Panc1 (cell line): ENCODE measurements at regions of chr9 and their contacts with region 1.

Region 1: GRCh38 chr9:116432051-116432450 is 255.1 kb upstream of the TRIM32 start:
- DNase-seq: no peak
- ATAC-seq: no peak
- H3K4me3 ChIP-seq: no peak overlapping the region
- H3K27ac ChIP-seq: no peak overlapping the region
- H3K4me1 ChIP-seq: no peaks in the 10 kb centered on the region
- H3K27me3 ChIP-seq: no peaks in the 10 kb centered on the region
- CTCF ChIP-seq: no peak

Region 2: DNA sequence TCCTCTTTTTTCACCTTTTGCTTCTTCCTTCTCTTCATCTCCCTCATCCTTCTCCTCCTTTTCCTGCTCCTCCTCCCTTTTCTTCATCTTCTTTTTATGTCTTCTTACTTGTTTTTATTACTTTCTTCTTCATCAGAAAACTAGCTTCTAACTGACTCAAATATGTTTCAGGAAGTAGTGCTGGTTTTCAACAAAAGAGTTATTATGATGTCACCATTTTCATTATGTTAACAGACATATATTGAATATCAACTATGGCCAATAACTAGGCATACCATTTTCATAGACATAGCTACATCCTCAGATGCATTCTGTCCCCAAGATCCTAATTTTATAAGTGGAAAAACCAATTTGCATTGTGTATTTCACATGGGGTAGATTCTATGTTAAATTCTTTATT is 531.4 kb before region 1 on chr9:
- CTCF ChIA-PET with region 1: no interaction called
- POLR2A ChIA-PET with region 1: no interaction called
- in situ Hi-C with region 1: no loop called
- intact Hi-C with region 1: no loop called
- DNase-seq: no peak
- ATAC-seq: no peak
- H3K4me3 ChIP-seq: no peak overlapping the region
- H3K27ac ChIP-seq: no peak overlapping the region
- H3K4me1 ChIP-seq: no peaks in the 10 kb centered on the region
- H3K27me3 ChIP-seq: no peaks in the 10 kb centered on the region
- CTCF ChIP-seq: no peak

Region 3: GRCh38 chr9:117535434-117535833 is 1103.4 kb after region 1 on chr9:
- CTCF ChIA-PET with region 1: interaction called, 12 read pairs
- POLR2A ChIA-PET with region 1: no interaction called
- in situ Hi-C with region 1: no loop called
- intact Hi-C with region 1: no loop called
- DNase-seq: no peak
- ATAC-seq: no peak
- H3K4me3 ChIP-seq: no peak overlapping the region
- H3K27ac ChIP-seq: no peak overlapping the region
- H3K4me1 ChIP-seq: no peaks in the 10 kb centered on the region
- H3K27me3 ChIP-seq: no peaks in the 10 kb centered on the region
- CTCF ChIP-seq: no peak